ENCODE measurements at regions of chr22 and their contacts with region 1.

Region 1: GRCh38 chr22:37686002-37686982 is at the start of gene NOL12:
- DNase-seq: peak; percentile 79
- ATAC-seq: peak; percentile 88
- H3K4me3 Mint-ChIP-seq: peak within 1 kb of the TSS; percentile 99
- H3K27ac Mint-ChIP-seq: peak within 1 kb of the TSS; percentile 96
- H3K4me1 Mint-ChIP-seq: peaks cover 26% of the 10 kb centered on the region
- H3K27me3 Mint-ChIP-seq: no peaks in the 10 kb centered on the region
- CTCF ChIP-seq: no peak
- total RNA-seq, gene NOL12: 36.8 to 38.8 TPM

Region 2: DNA sequence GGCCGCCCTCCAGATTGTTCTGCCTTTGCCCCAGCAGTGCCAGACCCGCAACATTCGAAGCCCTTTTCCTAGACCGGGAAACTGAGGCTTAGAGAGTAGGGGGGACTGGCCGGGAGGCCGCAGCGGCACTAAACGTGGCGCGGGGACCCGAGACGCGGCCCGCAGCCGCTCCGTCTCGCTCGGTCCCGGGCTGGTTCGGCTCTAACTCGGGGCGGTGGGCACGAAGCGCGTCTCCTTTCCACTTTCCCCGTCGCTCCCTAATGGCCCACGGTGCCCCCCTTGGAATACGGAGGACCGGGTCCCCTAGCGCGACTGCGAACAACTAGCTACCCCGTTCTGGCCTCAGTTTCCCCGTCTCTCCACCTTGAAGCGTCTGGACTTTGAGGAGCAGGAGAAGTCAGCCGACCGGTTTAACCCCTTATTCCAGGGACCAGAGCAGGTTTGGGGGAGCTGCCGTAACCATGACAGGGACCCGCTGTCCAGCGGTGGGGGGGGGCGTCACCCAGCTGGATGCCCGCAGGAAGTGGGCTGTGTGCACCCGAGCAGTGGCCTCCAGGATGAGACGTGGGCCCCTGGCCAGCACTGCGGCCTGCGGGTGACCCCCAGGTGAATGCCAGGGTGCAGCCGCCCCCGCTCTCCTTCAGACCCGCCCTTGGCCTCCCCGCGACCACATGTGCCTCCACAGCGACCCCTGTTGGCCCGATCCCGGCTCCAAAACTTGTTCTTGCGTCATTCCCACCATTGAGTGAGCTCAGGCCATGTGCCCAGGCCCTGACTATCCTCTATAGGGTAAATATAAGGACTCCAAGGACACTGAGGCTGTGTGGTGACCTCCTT is 124.9 kb before region 1 on chr22:
- CTCF ChIA-PET with region 1: no interaction called
- POLR2A ChIA-PET with region 1: no interaction called
- intact Hi-C with region 1: no loop called
- DNase-seq: peak; percentile 95
- ATAC-seq: peak; percentile 68
- H3K4me3 Mint-ChIP-seq: peak overlapping the region; percentile 50
- H3K27ac Mint-ChIP-seq: peak overlapping the region; percentile 65
- H3K4me1 Mint-ChIP-seq: peaks cover 27% of the 10 kb centered on the region
- H3K27me3 Mint-ChIP-seq: peaks cover 49% of the 10 kb centered on the region
- CTCF ChIP-seq: peak; percentile 82

Region 3: DNA sequence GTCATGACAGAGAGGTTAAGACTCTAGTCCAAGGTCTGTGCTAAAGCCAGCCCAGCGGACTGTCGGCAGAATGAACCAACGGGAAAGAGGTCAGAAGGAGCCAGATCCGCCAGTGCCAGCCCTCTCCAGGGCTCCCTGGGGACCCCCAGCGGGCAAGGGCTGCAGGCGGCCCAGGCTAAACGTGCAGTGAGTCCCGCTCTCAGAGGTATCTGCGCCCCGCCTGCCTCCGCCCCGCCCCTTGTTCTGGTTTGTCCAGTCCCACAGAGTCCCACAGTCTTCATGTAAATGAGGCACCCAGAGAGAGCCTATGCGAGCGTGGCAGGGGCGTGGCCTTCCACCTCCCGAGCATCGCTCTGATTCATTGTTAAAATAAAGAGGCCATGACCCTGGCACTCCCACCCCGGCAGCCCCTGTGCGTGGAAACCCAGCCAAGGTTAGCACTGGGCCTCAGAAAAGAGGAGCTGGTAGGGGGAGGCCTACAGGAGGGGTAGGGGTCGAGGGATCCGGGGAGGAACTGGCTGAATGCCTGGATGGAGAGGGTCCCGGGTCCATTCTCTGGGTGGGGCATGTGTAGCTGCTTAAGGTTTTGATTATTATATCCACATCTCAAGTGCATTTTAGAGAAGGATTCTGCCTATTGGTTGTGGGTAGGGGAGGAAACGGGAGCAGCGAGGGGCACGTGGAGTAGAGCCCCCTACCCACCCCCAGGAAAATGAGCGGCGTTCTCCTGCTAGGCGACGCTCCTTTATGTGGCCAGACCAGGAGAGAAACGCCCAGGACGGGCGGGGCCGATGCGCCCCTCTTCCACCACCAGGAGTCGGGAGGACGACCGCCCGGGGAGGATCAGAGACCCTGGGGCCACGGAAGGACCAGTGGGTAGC is 10.6 kb after region 1 on chr22 and contains the start of gene TRIOBP:
- CTCF ChIA-PET with region 1: interaction called, 13 read pairs
- POLR2A ChIA-PET with region 1: interaction called, 11 read pairs
- intact Hi-C with region 1: no loop called
- DNase-seq: peak; percentile 98
- ATAC-seq: peak; percentile 99
- H3K4me3 Mint-ChIP-seq: peak within 1 kb of the TSS; percentile 65
- H3K27ac Mint-ChIP-seq: peak within 1 kb of the TSS; percentile 24
- H3K4me1 Mint-ChIP-seq: peaks cover 14% of the 10 kb centered on the region
- H3K27me3 Mint-ChIP-seq: no peaks in the 10 kb centered on the region
- CTCF ChIP-seq: peak; percentile 46
- total RNA-seq, gene TRIOBP: 17.8 to 20.7 TPM